ENCODE measurements at regions of chr21 and their contacts with region 1.

Region 1: GRCh38 chr21:31476263-31477022 is 132.4 kb upstream of the TIAM1 start:
- DNase-seq: no peak
- H3K4me3 Mint-ChIP-seq: no peak overlapping the region
- H3K27ac Mint-ChIP-seq: no peak overlapping the region
- H3K4me1 Mint-ChIP-seq: no peaks in the 10 kb centered on the region
- H3K27me3 Mint-ChIP-seq: peaks cover 10% of the 10 kb centered on the region

Region 2: DNA sequence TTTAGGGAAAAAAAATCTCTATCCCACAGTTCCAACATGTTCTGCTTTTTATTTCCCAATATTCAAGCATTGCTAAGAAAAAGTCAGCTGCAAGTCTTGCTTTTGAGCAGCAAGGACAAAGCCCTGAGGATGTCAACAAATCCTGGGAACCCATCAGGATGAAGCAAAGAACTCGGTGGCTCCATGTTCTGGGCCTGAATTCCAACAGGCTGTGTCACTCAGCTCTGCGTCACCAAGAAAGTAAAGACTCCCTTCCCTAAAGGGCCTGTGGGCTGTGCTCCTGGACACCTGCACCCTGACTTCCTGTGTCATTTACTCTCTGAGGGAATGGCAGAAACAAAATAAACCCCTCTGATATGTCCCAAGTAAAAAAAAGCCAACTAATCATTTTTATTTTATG is 227.8 kb before region 1 on chr21:
- intact Hi-C with region 1: no loop called
- DNase-seq: no peak
- H3K4me3 Mint-ChIP-seq: no peak overlapping the region
- H3K27ac Mint-ChIP-seq: no peak overlapping the region
- H3K4me1 Mint-ChIP-seq: no peaks in the 10 kb centered on the region
- H3K27me3 Mint-ChIP-seq: no peaks in the 10 kb centered on the region

Region 3: GRCh38 chr21:31326522-31327242 is 149.8 kb before region 1 on chr21:
- intact Hi-C with region 1: no loop called
- DNase-seq: peak; percentile 16
- H3K4me3 Mint-ChIP-seq: peak overlapping the region; percentile 24
- H3K27ac Mint-ChIP-seq: peak overlapping the region; percentile 67
- H3K4me1 Mint-ChIP-seq: peaks cover 19% of the 10 kb centered on the region
- H3K27me3 Mint-ChIP-seq: no peaks in the 10 kb centered on the region

Region 4: DNA sequence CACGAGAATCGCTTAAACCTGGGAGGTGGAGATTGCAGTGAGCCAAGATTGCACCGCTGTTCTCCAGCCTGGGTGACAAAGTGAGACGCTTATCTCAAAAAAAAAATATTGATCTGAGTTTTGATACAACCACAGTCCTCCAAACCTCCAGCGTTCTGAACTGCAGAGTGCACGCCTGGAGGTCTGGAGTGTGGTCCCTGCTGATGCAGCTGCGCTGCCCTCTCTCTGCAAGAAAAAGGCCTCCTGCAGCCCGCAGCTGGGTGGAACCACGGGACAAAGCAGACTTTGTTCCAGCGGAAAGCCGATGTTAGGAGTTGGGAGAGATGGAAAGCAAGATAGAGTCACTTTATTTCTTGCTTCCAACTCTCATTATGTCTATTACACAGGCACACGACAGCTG is 38.2 kb after region 1 on chr21:
- intact Hi-C with region 1: no loop called
- DNase-seq: no peak
- H3K4me3 Mint-ChIP-seq: no peak overlapping the region
- H3K27ac Mint-ChIP-seq: no peak overlapping the region
- H3K4me1 Mint-ChIP-seq: peaks cover 13% of the 10 kb centered on the region
- H3K27me3 Mint-ChIP-seq: peaks cover 32% of the 10 kb centered on the region

Region 5: GRCh38 chr21:31530897-31531705 is 54.7 kb after region 1 on chr21:
- intact Hi-C with region 1: loop called (anchors 10 kb)
- DNase-seq: no peak
- H3K4me3 Mint-ChIP-seq: no peak overlapping the region
- H3K27ac Mint-ChIP-seq: no peak overlapping the region
- H3K4me1 Mint-ChIP-seq: peaks cover 17% of the 10 kb centered on the region
- H3K27me3 Mint-ChIP-seq: peaks cover 8% of the 10 kb centered on the region

Measured in activated T-helper 2 cell treated with anti-CD3 and anti-CD28 coated beads, Interferon-gamma antibody, Interleukin-2, Interleukin-4, amounts not matched to agents 10 μg/mL and 5 μg/mL and 100 μg/mL, durations not matched to agents 14 hours and 24 hours and 36 hours (primary cell).